Activated CD4-positive, alpha-beta memory T cell treated with anti-CD3 and anti-CD28 coated beads for 36 hours (primary cell): ENCODE measurements at regions of chr17 and their contacts with region 1.

Region 1: DNA sequence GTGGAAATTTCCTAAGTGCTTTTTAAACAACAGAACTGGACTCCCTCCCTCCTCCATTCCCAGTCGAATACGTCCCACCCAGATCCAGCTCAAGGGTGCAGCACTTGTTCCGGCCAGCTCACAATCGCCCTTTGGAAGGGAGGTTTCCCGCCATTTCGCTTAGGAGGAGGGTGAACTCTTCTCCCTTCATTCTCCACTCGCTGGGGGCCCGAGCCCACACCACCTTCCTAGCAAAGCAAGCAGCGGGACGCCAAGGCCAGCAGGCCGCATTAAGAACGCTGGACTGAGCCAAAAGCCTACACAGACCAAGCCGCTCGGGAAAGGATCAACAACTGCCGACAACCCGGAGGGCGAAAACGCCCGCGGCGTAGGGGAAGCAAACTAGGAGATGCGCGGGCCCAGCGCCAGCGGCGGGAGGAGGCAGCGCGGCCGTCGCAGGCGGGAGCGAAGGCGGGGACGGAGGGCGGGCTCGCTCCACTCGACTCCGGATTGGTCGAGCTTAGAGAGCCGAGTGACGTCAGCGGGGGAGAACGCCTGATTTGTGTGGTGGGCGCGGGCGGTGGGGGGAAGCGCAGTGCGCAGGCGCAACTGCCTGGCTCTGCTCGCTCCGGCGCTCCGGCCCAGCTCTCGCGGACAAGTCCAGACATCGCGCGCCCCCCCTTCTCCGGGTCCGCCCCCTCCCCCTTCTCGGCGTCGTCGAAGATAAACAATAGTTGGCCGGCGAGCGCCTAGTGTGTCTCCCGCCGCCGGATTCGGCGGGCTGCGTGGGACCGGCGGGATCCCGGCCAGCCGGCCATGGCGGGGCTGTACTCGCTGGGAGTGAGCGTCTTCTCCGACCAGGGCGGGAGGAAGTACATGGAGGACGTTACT is at the start of gene PPM1D:
- DNase-seq: peak; percentile 99
- H3K4me3 Mint-ChIP-seq: peak within 1 kb of the TSS; percentile 94
- H3K27ac Mint-ChIP-seq: peak within 1 kb of the TSS; percentile 89
- H3K4me1 Mint-ChIP-seq: peaks cover 35% of the 10 kb centered on the region
- H3K27me3 Mint-ChIP-seq: no peaks in the 10 kb centered on the region
- total RNA-seq, gene PPM1D: 9.4 to 10.9 TPM

Region 2: DNA sequence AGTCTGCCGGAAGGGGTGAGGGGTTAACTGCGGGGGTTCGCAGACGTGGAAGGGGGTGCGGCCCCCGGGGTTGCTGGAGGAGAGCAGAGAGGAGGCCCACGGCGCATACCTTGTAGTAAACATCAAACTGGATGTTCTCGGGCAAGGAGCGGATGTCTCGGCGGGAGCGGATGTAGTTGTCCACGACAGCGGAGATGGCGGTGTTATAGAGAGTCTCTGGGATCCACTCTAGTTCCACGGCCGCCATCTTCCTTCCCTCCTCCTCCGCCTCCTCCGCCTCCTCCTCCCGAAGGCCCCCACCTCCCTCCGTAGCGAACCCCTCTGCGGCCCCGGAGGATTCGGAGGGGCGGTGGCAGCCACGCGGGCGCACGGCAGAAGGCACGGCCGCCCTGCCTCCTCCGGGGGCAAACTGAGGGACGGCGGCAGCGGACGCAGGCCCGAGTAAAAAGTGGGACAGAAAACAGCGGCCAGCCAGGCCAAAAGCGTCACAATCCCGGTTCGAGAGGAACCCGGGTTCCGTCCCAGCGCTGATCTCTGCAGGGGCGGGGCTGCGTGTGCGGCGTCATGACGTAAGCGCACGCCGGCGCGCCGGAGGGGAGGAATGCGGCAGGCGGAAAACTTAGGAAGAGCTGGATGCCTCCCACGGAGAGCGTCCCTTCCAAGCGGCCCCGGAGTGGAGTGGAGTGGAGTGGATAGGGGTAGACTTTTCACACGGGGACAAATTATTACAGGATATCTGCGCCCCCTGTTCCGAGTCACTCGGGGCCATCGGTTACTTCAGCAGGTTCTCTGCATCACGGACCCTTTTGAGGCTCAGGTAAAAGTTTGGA is 74.0 kb before region 1 on chr17 and contains the start of gene APPBP2:
- CTCF ChIA-PET with region 1: interaction called, 4 read pairs
- POLR2A ChIA-PET with region 1: interaction called, 3 read pairs
- intact Hi-C with region 1: loop called (anchors 2 kb)
- DNase-seq: peak; percentile 78
- H3K4me3 Mint-ChIP-seq: peak within 1 kb of the TSS; percentile 99
- H3K27ac Mint-ChIP-seq: peak within 1 kb of the TSS; percentile 91
- H3K4me1 Mint-ChIP-seq: peaks cover 37% of the 10 kb centered on the region
- H3K27me3 Mint-ChIP-seq: no peaks in the 10 kb centered on the region
- total RNA-seq, gene APPBP2: 25.7 to 31.0 TPM

Region 3: GRCh38 chr17:60677308-60678124 is 77.7 kb after region 1 on chr17 and contains the start of gene BCAS3:
- CTCF ChIA-PET with region 1: interaction called, 3 read pairs
- POLR2A ChIA-PET with region 1: interaction called, 10 read pairs
- intact Hi-C with region 1: loop called (anchors 2 kb)
- DNase-seq: peak; percentile 99
- H3K4me3 Mint-ChIP-seq: peak within 1 kb of the TSS; percentile 90
- H3K27ac Mint-ChIP-seq: peak within 1 kb of the TSS; percentile 59
- H3K4me1 Mint-ChIP-seq: peaks cover 19% of the 10 kb centered on the region
- H3K27me3 Mint-ChIP-seq: no peaks in the 10 kb centered on the region
- total RNA-seq, gene BCAS3: 6.8 to 7.1 TPM

Region 4: GRCh38 chr17:60809421-60809820 is 209.6 kb after region 1 on chr17:
- CTCF ChIA-PET with region 1: no interaction called
- POLR2A ChIA-PET with region 1: no interaction called
- intact Hi-C with region 1: no loop called
- DNase-seq: no peak
- H3K4me3 Mint-ChIP-seq: no peak overlapping the region
- H3K27ac Mint-ChIP-seq: no peak overlapping the region
- H3K4me1 Mint-ChIP-seq: no peaks in the 10 kb centered on the region
- H3K27me3 Mint-ChIP-seq: no peaks in the 10 kb centered on the region